Heart right ventricle (tissue), 16 donors: ENCODE measurements at regions of chr7 and their contacts with region 1.

Region 1: GRCh38 chr7:68823996-68824780 is 774.1 kb upstream of the AUTS2 start:
- DNase-seq: no peak
- ATAC-seq: no peak
- H3K4me3 ChIP-seq: no peak overlapping the region
- H3K27ac ChIP-seq: no peak overlapping the region
- H3K4me1 ChIP-seq: no peaks in the 10 kb centered on the region
- H3K27me3 ChIP-seq: peaks cover 0 to 20% (median 7%) of the 10 kb centered on the region in 7 donors
- CTCF ChIP-seq: no peak

Region 2: GRCh38 chr7:68250143-68250542 is 574.0 kb before region 1 on chr7:
- intact Hi-C with region 1: loop called in 1 of 10 experiments (anchors 5 kb)
- DNase-seq: no peak
- ATAC-seq: no peak
- H3K4me3 ChIP-seq: no peak overlapping the region
- H3K27ac ChIP-seq: no peak overlapping the region
- H3K4me1 ChIP-seq: no peaks in the 10 kb centered on the region
- H3K27me3 ChIP-seq: peaks cover 0 to 8% (median 0%) of the 10 kb centered on the region in 7 donors
- CTCF ChIP-seq: no peak

Region 3: GRCh38 chr7:68706291-68706690 is 117.9 kb before region 1 on chr7:
- intact Hi-C with region 1: no loop called
- DNase-seq: no peak
- ATAC-seq: no peak
- H3K4me3 ChIP-seq: no peak overlapping the region
- H3K27ac ChIP-seq: no peak overlapping the region
- H3K4me1 ChIP-seq: no peaks in the 10 kb centered on the region
- H3K27me3 ChIP-seq: peaks cover 0 to 21% (median 4%) of the 10 kb centered on the region in 7 donors
- CTCF ChIP-seq: no peak